ENCODE measurements at regions of chr3 and their contacts with region 1.

Region 1: DNA sequence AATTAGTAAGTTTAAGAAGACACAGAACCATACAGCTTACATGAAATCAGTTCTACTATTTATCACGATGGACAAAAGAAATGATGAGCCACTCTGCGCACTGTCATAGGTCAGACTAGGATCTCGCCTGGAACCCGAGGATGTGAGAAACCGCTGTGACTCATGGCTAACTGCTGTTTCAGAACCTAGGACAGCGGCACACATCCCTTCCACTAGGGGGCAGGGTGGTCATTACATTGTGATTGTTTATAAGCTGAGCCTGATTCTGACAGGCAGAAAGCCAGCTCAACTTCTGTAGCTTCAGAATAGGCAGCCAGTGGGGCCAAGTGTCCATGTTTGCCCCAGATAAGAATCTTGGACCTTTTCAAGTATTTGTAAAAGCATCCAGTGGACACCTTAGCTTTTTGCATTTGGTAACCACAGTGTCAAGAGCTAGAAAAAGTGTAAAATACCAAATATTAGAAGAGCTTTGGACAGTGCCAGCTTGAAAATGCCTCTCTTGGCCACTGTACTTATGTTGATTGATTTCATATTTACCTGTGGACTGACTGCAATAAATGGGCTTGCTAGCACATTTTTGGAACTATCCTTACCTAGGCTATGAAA is 115.8 kb downstream of the KBTBD8 start:
- DNase-seq: peak; percentile 80
- ATAC-seq: peak; percentile 94
- H3K4me3 ChIP-seq: no peak overlapping the region
- H3K4me3 Mint-ChIP-seq: no peak overlapping the region
- H3K27ac ChIP-seq: no peak overlapping the region
- H3K27ac Mint-ChIP-seq: no peak overlapping the region
- H3K4me1 ChIP-seq: no peaks in the 10 kb centered on the region
- H3K4me1 Mint-ChIP-seq: peaks cover 1% of the 10 kb centered on the region
- H3K27me3 ChIP-seq: peaks cover 0 to 6% (median 2%) of the 10 kb centered on the region in 4 experiments
- H3K27me3 Mint-ChIP-seq: peaks cover 17% of the 10 kb centered on the region
- CTCF ChIP-seq: peak; percentile 96

Region 2: DNA sequence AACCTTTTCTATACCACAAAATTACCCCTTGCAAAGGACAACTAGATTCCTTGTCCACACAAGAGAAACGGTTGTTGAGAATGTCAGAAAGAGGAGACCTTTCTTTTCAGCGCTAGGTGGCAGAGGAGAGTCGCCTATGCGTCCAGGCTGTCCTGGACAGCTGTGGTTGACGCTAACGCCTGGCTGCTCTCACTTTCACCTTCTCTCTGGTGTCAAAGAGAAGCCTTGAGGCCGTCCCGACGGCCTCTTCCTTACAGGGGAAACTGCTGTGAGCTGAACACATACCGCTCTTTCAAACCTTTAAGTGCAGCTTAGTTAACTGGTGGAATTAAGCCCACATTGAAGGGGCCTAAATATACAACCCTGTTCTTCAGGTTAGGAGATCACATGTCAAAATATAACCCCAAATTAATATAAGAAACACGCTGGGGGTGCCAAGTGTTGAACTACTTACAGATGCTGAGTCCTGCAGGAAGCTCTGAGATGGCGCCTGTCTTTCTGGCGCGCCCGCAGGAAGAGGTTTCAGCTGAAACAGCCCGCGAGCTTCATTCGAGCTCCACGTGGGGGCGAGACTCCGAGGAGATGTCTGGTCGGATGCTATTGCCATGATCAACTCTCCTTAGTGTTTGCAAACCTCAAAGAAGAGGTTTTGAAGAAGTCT is 141.9 kb before region 1 on chr3:
- CTCF ChIA-PET with region 1: interaction called, 98 read pairs
- POLR2A ChIA-PET with region 1: no interaction called
- intact Hi-C with region 1: loop called (anchors 1 kb)
- DNase-seq: peak; percentile 84
- ATAC-seq: peak; percentile 97
- H3K4me3 ChIP-seq: peak overlapping the region; percentile 28 to 69 (median 55)
- H3K4me3 Mint-ChIP-seq: peak overlapping the region; percentile 86
- H3K27ac ChIP-seq: peak overlapping the region; percentile 31 to 46
- H3K27ac Mint-ChIP-seq: peak overlapping the region; percentile 87
- H3K4me1 ChIP-seq: peaks cover 11 to 13% of the 10 kb centered on the region in 2 donors
- H3K4me1 Mint-ChIP-seq: peaks cover 15% of the 10 kb centered on the region
- H3K27me3 ChIP-seq: no peaks in the 10 kb centered on the region
- H3K27me3 Mint-ChIP-seq: no peaks in the 10 kb centered on the region
- CTCF ChIP-seq: peak; percentile 87

Region 3: DNA sequence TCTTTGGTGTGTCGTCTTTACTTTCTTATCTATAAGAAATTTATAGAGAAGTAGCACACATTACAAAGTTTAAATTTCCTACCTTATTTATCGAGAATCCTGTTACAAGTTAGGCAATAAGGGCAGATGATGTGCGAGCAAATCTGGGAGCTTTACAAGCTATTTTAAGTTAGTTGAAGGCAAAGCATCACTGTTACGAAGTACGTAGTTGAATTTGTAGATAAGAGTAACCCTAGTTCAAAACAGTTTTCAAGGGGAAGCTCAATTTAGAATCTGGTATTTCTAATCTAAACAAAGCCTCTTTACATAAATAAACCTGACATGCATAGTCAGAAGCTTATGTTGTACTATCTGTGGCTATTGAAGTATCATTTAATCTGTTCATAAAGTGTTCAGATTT is 107.4 kb before region 1 on chr3:
- CTCF ChIA-PET with region 1: interaction called, 11 read pairs
- POLR2A ChIA-PET with region 1: no interaction called
- intact Hi-C with region 1: no loop called
- DNase-seq: no peak
- ATAC-seq: no peak
- H3K4me3 ChIP-seq: peak overlapping the region in 1 of 5 experiments; percentile 28
- H3K4me3 Mint-ChIP-seq: peak overlapping the region; percentile 63
- H3K27ac ChIP-seq: no peak overlapping the region
- H3K27ac Mint-ChIP-seq: peak overlapping the region; percentile 46
- H3K4me1 ChIP-seq: peaks cover 26 to 53% of the 10 kb centered on the region in 2 donors
- H3K4me1 Mint-ChIP-seq: peaks cover 79% of the 10 kb centered on the region
- H3K27me3 ChIP-seq: no peaks in the 10 kb centered on the region
- H3K27me3 Mint-ChIP-seq: no peaks in the 10 kb centered on the region
- CTCF ChIP-seq: no peak

Region 4: GRCh38 chr3:67123914-67124313 is 10.0 kb after region 1 on chr3:
- CTCF ChIA-PET with region 1: interaction called, 28 read pairs
- POLR2A ChIA-PET with region 1: no interaction called
- intact Hi-C with region 1: no loop called
- DNase-seq: no peak
- ATAC-seq: no peak
- H3K4me3 ChIP-seq: no peak overlapping the region
- H3K4me3 Mint-ChIP-seq: no peak overlapping the region
- H3K27ac ChIP-seq: no peak overlapping the region
- H3K27ac Mint-ChIP-seq: no peak overlapping the region
- H3K4me1 ChIP-seq: no peaks in the 10 kb centered on the region
- H3K4me1 Mint-ChIP-seq: no peaks in the 10 kb centered on the region
- H3K27me3 ChIP-seq: no peaks in the 10 kb centered on the region
- H3K27me3 Mint-ChIP-seq: peaks cover 4% of the 10 kb centered on the region
- CTCF ChIP-seq: no peak

Region 5: GRCh38 chr3:67167481-67167880 is 53.6 kb after region 1 on chr3:
- CTCF ChIA-PET with region 1: no interaction called
- POLR2A ChIA-PET with region 1: no interaction called
- intact Hi-C with region 1: no loop called
- DNase-seq: no peak
- ATAC-seq: no peak
- H3K4me3 ChIP-seq: no peak overlapping the region
- H3K4me3 Mint-ChIP-seq: no peak overlapping the region
- H3K27ac ChIP-seq: no peak overlapping the region
- H3K27ac Mint-ChIP-seq: no peak overlapping the region
- H3K4me1 ChIP-seq: no peaks in the 10 kb centered on the region
- H3K4me1 Mint-ChIP-seq: no peaks in the 10 kb centered on the region
- H3K27me3 ChIP-seq: no peaks in the 10 kb centered on the region
- H3K27me3 Mint-ChIP-seq: peaks cover 10% of the 10 kb centered on the region
- CTCF ChIP-seq: no peak

Region 6: GRCh38 chr3:68256635-68257223 is 1142.8 kb after region 1 on chr3:
- CTCF ChIA-PET with region 1: no interaction called
- POLR2A ChIA-PET with region 1: no interaction called
- intact Hi-C with region 1: loop called (anchors 5 kb)
- DNase-seq: no peak
- ATAC-seq: no peak
- H3K4me3 ChIP-seq: no peak overlapping the region
- H3K4me3 Mint-ChIP-seq: no peak overlapping the region
- H3K27ac ChIP-seq: no peak overlapping the region
- H3K27ac Mint-ChIP-seq: no peak overlapping the region
- H3K4me1 ChIP-seq: no peaks in the 10 kb centered on the region
- H3K4me1 Mint-ChIP-seq: no peaks in the 10 kb centered on the region
- H3K27me3 ChIP-seq: no peaks in the 10 kb centered on the region
- H3K27me3 Mint-ChIP-seq: no peaks in the 10 kb centered on the region
- CTCF ChIP-seq: no peak

Measured in B cell (primary cell).